Common myeloid progenitor, CD34-positive (primary cell): ENCODE measurements at regions of chr14 and their contacts with region 1.

Region 1: GRCh38 chr14:64800000-64800399 is 79.7 kb downstream of the SPTB start:
- DNase-seq: peak; percentile 43 to 58 (median 50)
- H3K4me3 ChIP-seq: no peak overlapping the region
- H3K27ac ChIP-seq: no peak overlapping the region
- H3K4me1 ChIP-seq: peaks cover 0 to 6% (median 1%) of the 10 kb centered on the region in 4 experiments
- H3K27me3 ChIP-seq: peaks cover 0 to 4% (median 0%) of the 10 kb centered on the region in 5 experiments

Region 2: GRCh38 chr14:64786296-64787149 is 13.5 kb before region 1 on chr14:
- CTCF ChIA-PET with region 1: interaction called, 42 read pairs
- POLR2A ChIA-PET with region 1: no interaction called
- DNase-seq: no peak
- H3K4me3 ChIP-seq: no peak overlapping the region
- H3K27ac ChIP-seq: no peak overlapping the region
- H3K4me1 ChIP-seq: peaks cover 0 to 3% (median 0%) of the 10 kb centered on the region in 4 experiments
- H3K27me3 ChIP-seq: peaks cover 0 to 2% (median 0%) of the 10 kb centered on the region in 5 experiments

Region 3: DNA sequence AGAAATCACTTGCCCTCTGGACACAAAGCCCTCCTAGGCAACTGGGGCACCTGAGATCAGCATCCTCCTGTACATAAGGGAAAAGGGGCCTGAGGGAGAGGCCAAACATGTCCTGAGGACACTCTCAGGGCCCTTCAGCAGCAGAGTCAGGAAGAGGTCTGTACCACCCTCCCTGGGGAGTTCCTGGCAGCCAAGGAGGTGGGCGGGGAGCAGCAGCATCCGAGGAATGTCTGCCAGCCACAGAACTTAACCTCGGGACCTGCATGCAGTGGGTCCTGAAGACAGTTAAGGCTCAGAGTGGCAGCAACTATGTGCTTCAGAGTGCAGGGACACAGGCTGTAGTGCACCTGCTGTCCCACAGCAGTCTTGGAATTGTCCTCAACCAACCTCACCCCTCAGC is 17.6 kb after region 1 on chr14:
- CTCF ChIA-PET with region 1: interaction called, 16 read pairs
- POLR2A ChIA-PET with region 1: no interaction called
- DNase-seq: no peak
- H3K4me3 ChIP-seq: no peak overlapping the region
- H3K27ac ChIP-seq: no peak overlapping the region
- H3K4me1 ChIP-seq: no peaks in the 10 kb centered on the region
- H3K27me3 ChIP-seq: peaks cover 0 to 18% (median 0%) of the 10 kb centered on the region in 5 experiments

Region 4: GRCh38 chr14:64870160-64870559 is 70.2 kb after region 1 on chr14:
- CTCF ChIA-PET with region 1: no interaction called
- POLR2A ChIA-PET with region 1: no interaction called
- DNase-seq: peak; percentile 41 to 79 (median 71)
- H3K4me3 ChIP-seq: peak overlapping the region in 1 of 7 experiments; percentile 6
- H3K27ac ChIP-seq: no peak overlapping the region
- H3K4me1 ChIP-seq: peaks cover 0 to 10% (median 6%) of the 10 kb centered on the region in 4 experiments
- H3K27me3 ChIP-seq: peaks cover 0 to 1% (median 0%) of the 10 kb centered on the region in 5 experiments